Calu3 (cell line): ENCODE measurements at regions of chr12 and their contacts with region 1.

Region 1: DNA sequence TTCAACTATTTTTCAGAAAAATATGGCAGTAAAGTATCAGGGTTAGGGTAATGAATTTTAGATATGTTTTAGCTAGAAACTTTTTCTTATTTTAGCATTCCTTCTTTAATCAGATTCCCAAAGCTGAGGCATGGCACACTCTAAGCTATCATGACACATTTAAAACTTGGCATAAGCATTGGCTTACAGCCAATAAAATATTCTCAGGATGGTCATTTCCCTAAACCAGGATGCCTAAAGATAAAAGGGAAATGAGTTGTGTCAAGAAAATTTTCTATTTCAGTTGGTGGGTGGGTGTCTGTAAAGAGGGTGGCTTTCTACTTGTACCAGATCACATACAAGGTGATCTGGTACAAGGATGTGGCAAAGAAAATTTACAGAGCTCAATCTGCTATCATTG is 47.8 kb downstream of the PEBP1 start:
- DNase-seq: no peak
- H3K4me3 Mint-ChIP-seq: no peak overlapping the region
- H3K27ac Mint-ChIP-seq: no peak overlapping the region
- H3K4me1 Mint-ChIP-seq: peaks cover 46% of the 10 kb centered on the region
- H3K27me3 Mint-ChIP-seq: no peaks in the 10 kb centered on the region
- CTCF ChIP-seq: no peak

Region 2: DNA sequence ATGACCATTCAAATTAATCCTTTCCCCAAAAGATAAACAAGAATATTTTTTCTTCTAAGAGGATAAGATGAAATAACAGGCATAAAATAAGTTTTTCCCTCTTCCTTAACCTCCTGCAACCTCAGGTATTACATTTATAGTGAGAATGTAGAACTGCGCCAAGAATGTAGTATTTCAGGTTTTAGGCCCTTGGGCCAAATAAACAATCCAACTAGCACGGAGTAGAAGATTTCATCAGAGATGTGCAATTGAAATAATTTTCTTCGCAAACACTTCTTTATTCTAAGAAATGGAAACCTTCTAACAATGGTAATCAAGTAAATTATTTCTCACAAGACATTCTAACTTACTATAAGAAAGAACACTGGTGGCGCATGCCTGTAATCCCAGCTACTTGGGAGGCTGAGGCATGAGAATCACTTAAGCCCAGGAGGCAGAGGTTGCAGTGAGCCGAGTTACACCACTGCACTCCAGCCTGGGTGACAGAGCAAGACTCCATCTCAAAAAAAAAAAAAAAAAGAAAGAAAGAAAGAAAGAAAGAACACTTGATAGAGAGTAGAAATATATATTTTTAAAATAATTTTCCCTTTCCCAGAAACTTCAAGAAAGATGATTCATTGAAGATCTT is 88.2 kb after region 1 on chr12:
- CTCF ChIA-PET with region 1: no interaction called
- intact Hi-C with region 1: loop called (anchors 5 kb)
- DNase-seq: peak; percentile 65
- H3K4me3 Mint-ChIP-seq: peak overlapping the region; percentile 55
- H3K27ac Mint-ChIP-seq: peak overlapping the region; percentile 90
- H3K4me1 Mint-ChIP-seq: peaks cover 42% of the 10 kb centered on the region
- H3K27me3 Mint-ChIP-seq: no peaks in the 10 kb centered on the region
- CTCF ChIP-seq: no peak